Gastrocnemius medialis (tissue), 4 donors: ENCODE measurements at regions of chr16 and their contacts with region 1.

Region 1: GRCh38 chr16:31073968-31074813 is at the starts of genes ZNF646 and ZNF668:
- DNase-seq: peak; percentile 98
- ATAC-seq: peak; percentile 88 to 94
- H3K4me3 ChIP-seq: peak within 1 kb of the TSS; percentile 95 to 100 (median 96)
- H3K27ac ChIP-seq: peak within 1 kb of the TSS; percentile 97 to 99 (median 99)
- H3K4me1 ChIP-seq: peaks cover 24 to 30% of the 10 kb centered on the region in 2 donors
- H3K27me3 ChIP-seq: no peaks in the 10 kb centered on the region
- CTCF ChIP-seq: no peak
- POLR2A ChIP-seq: peak; percentile 78 to 93
- total RNA-seq, gene ZNF646: 11.7 to 33.2 (median 21.5) TPM
- total RNA-seq, gene ZNF668: 6.6 to 16.0 (median 11.0) TPM

Region 2: DNA sequence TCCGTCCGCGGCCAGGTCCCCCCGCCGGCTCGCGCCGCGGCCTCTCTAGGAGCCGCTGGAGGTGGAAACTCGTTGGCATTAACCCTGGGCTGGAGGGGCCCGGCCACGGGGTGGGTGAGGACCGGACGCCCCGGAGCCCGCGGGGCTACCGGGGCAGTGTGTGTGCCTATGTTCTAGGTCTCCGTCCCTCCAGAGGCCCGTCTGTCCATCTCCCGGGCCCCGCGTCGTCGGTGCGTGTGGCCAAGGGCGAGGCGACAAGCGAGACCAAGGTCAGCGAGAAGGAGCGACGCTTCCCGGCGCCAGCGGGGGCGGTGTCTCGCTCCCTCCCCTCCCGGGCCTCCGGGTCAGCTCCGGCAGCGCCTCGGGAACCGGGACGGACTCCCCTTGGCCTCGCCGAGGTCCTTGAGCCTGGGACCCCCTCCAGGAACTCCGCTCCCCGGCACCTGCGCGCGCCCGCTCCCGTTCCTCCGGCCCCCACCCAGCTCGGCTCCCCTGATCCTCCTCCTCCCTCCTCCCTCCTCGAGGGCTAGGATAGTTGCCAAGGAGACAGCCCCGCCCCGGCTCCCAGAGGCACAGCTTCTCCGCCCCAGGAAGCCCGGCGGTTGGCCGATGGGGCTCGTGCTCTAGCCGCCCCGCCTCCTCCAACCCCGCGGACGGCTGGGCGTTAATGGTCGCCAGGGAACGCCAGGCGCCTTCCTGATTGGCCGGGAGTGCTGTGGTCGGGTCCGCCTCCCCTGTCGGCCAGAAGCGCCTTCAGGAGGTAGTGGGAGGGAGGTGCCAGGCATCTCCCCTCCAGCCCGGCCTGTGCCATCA is 547.2 kb before region 1 on chr16:
- in situ Hi-C with region 1: no loop called
- intact Hi-C with region 1: loop called (anchors 5 kb)
- DNase-seq: peak; percentile 98
- ATAC-seq: peak; percentile 87 to 91
- H3K4me3 ChIP-seq: peak overlapping the region; percentile 66 to 91 (median 86)
- H3K27ac ChIP-seq: peak overlapping the region; percentile 96 to 100 (median 97)
- H3K4me1 ChIP-seq: peaks cover 19 to 36% of the 10 kb centered on the region in 2 donors
- H3K27me3 ChIP-seq: no peaks in the 10 kb centered on the region
- CTCF ChIP-seq: peak in 4 of 5 experiments; percentile 45 to 62 (median 52)
- POLR2A ChIP-seq: peak; percentile 80 to 88

Region 3: DNA sequence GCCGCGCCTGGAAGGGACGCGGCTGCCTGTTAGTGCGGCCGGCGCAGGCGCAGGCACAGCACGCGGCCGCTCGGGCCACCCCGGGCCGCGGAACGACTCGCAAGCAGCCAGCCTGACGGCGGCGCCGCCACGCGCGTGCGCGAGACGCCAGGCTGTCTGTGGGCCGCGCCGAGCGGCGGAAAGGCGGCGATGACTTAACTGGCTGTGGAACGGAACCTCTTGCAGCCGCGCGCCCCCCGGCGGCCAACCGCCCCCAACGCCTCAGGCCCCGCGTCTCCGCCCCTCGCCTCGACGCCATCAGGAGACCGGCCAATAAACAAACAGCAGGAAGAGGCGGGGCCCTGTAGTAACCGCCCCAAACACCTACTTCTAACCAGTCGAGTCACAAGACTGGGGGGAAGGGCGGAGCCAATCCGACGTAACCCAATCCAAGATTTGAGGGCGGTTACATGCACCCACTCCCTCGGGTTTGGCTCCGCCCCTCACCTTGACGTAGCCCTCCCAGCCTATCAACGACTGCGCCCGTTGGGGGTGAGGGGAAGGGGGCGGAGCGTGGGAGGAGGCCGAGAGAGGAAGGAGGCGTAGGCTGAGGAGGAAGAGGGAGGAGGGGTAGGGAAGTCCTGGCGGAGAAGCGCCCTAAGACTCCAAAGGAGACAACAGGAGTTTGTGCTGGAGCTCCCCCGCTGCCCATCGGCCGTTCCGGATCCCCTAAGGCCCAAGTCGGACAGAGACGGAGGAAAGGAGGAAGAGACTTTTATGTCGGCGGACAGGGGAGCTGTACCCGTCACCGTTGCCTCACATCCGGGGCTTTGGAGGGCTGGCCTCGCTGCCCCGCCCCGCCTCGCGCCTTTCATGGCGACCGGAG is 416.1 kb before region 1 on chr16 and contains the start of gene FBRS:
- in situ Hi-C with region 1: no loop called
- intact Hi-C with region 1: loop called (anchors 2 kb)
- DNase-seq: peak; percentile 100
- ATAC-seq: peak; percentile 83 to 88
- H3K4me3 ChIP-seq: peak within 1 kb of the TSS; percentile 61 to 89 (median 79)
- H3K27ac ChIP-seq: peak within 1 kb of the TSS; percentile 93 to 99 (median 96)
- H3K4me1 ChIP-seq: peaks cover 32 to 33% of the 10 kb centered on the region in 2 donors
- H3K27me3 ChIP-seq: no peaks in the 10 kb centered on the region
- CTCF ChIP-seq: peak; percentile 64 to 90 (median 83)
- POLR2A ChIP-seq: peak; percentile 83 to 88
- total RNA-seq, gene FBRS: 22.0 to 34.8 (median 28.0) TPM

Region 4: GRCh38 chr16:31032736-31033708 is 41.2 kb before region 1 on chr16 and contains the start of gene STX4:
- in situ Hi-C with region 1: loop called in 1 of 4 experiments (anchors 5 kb)
- intact Hi-C with region 1: loop called (anchors 1 kb)
- DNase-seq: peak; percentile 97 to 98
- ATAC-seq: peak; percentile 91 to 93
- H3K4me3 ChIP-seq: peak within 1 kb of the TSS; percentile 82 to 99 (median 95)
- H3K27ac ChIP-seq: peak within 1 kb of the TSS; percentile 91 to 98 (median 92)
- H3K4me1 ChIP-seq: peaks cover 8 to 14% of the 10 kb centered on the region in 2 donors
- H3K27me3 ChIP-seq: no peaks in the 10 kb centered on the region
- CTCF ChIP-seq: peak in 3 of 5 experiments; percentile 2 to 54 (median 44)
- POLR2A ChIP-seq: peak; percentile 54 to 68
- total RNA-seq, gene STX4: 14.9 to 24.3 (median 21.4) TPM

Region 5: GRCh38 chr16:31094424-31095120 is 20.4 kb after region 1 on chr16 and contains the start of gene VKORC1:
- in situ Hi-C with region 1: no loop called
- intact Hi-C with region 1: loop called (anchors 1 kb)
- DNase-seq: peak; percentile 95 to 96
- ATAC-seq: peak; percentile 94 to 98
- H3K4me3 ChIP-seq: peak within 1 kb of the TSS; percentile 74 to 86 (median 77)
- H3K27ac ChIP-seq: peak within 1 kb of the TSS; percentile 88 to 94 (median 94)
- H3K4me1 ChIP-seq: peaks cover 8 to 13% of the 10 kb centered on the region in 2 donors
- H3K27me3 ChIP-seq: no peaks in the 10 kb centered on the region
- CTCF ChIP-seq: peak in 3 of 5 experiments; percentile 10 to 12 (median 11)
- POLR2A ChIP-seq: peak; percentile 76 to 79
- total RNA-seq, gene VKORC1: 20.1 to 35.9 (median 32.9) TPM

Region 6: DNA sequence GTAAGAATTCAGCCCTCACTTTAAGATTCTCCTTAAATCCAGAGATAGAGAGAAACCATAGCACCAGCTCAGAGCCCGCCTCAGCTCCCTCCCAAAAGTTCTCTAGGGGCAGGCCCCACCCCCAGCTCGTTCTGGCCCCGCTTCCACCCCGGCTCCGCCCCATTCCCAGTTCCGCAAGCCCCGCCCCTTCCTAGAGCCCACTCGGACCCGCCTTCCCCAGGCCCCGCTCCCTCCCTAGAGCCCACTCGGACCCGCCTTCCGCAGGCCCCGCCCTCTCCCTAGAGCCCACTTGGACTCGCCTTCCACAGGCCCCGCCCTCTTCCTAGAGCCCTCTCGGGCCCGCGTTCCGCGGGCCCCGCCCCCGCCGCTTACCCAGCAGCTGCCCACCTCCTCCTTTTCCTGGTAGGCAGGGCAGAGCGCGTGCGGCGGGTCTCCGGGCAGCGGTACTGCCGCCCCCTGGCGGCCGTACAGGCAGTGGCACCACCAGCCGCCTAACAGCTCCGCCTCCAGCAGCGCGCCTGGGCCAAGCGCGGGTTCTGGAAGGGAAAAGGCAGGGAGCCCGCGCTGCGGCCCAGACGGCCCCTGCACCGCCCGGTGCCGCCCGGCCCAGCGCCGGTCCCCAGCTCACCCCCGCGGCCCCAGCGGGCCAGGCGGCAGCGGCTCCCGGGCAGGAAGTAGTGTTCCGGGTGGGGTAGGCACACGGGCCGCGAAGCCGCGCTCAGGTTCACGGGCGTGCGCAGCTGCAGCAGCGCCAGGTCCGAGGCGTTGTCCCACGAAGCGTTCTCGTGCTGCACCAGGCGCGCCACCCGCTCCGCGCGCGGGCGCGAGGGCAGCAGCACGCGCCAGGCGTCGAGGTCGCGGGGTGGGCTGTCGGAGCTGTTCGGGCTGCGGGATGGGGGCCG is 68.2 kb after region 1 on chr16:
- in situ Hi-C with region 1: no loop called
- intact Hi-C with region 1: loop called (anchors 1 kb)
- DNase-seq: peak; percentile 97 to 99
- ATAC-seq: peak; percentile 78 to 83
- H3K4me3 ChIP-seq: peak overlapping the region; percentile 42 to 75 (median 58)
- H3K27ac ChIP-seq: peak overlapping the region; percentile 79 to 88 (median 82)
- H3K4me1 ChIP-seq: peaks cover 19 to 22% of the 10 kb centered on the region in 2 donors
- H3K27me3 ChIP-seq: no peaks in the 10 kb centered on the region
- CTCF ChIP-seq: peak; percentile 98 to 100 (median 99)
- POLR2A ChIP-seq: peak; percentile 28 to 46